Breast epithelium (tissue), 4 donors: ENCODE measurements at regions of chr11 and their contacts with region 1.

Region 1: GRCh38 chr11:113234888-113235287 is 79.5 kb upstream of the TTC12 start:
- DNase-seq: no peak
- H3K4me3 ChIP-seq: no peak overlapping the region
- H3K27ac ChIP-seq: no peak overlapping the region
- H3K4me1 ChIP-seq: no peaks in the 10 kb centered on the region
- H3K27me3 ChIP-seq: no peaks in the 10 kb centered on the region
- CTCF ChIP-seq: no peak
- POLR2A ChIP-seq: no peak

Region 2: GRCh38 chr11:112784323-112785073 is 450.4 kb before region 1 on chr11:
- intact Hi-C with region 1: loop called (anchors 5 kb)
- DNase-seq: peak in 1 of 2 donors; percentile 51
- H3K4me3 ChIP-seq: peak overlapping the region in 2 of 3 donors; percentile 25 to 59
- H3K27ac ChIP-seq: peak overlapping the region; percentile 67 to 83
- H3K4me1 ChIP-seq: peaks cover 0 to 8% of the 10 kb centered on the region in 2 donors
- H3K27me3 ChIP-seq: no peaks in the 10 kb centered on the region
- CTCF ChIP-seq: no peak
- POLR2A ChIP-seq: no peak